MCF 10A (cell line): ENCODE measurements at regions of chr15 and their contacts with region 1.

Region 1: DNA sequence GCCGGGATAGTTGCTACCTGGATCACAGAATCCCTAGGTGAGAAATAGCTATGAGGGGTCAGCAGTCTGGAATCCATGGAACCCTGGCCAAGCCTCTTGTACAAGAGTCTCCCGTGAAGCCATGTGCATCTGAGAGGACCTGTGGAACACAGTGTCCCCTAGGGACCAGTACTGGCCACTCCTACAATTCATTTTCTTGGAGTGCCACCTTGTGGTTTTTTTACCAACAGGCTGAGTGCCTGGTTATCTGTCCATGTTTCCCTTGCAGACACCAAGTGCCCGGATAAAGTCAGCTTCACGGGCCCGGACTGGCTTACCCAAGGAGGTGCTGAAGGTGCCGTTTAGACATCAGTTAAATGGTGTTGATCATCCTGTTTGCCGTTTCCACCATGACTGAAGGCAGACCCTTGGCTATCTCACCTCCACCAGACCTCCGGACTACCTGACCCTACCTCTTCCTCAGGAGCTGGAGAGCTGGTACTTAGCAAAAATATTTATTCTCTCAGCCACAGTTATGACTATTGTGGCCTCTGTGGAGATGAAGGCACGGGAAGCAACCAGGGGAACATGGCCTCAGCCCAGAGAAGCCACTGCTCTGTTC is 93.9 kb downstream of the RBPMS2 start:
- DNase-seq: peak; percentile 68
- H3K4me3 Mint-ChIP-seq: no peak overlapping the region
- H3K27ac Mint-ChIP-seq: no peak overlapping the region
- H3K4me1 Mint-ChIP-seq: no peaks in the 10 kb centered on the region
- H3K27me3 Mint-ChIP-seq: no peaks in the 10 kb centered on the region
- CTCF ChIP-seq: peak; percentile 72

Region 2: DNA sequence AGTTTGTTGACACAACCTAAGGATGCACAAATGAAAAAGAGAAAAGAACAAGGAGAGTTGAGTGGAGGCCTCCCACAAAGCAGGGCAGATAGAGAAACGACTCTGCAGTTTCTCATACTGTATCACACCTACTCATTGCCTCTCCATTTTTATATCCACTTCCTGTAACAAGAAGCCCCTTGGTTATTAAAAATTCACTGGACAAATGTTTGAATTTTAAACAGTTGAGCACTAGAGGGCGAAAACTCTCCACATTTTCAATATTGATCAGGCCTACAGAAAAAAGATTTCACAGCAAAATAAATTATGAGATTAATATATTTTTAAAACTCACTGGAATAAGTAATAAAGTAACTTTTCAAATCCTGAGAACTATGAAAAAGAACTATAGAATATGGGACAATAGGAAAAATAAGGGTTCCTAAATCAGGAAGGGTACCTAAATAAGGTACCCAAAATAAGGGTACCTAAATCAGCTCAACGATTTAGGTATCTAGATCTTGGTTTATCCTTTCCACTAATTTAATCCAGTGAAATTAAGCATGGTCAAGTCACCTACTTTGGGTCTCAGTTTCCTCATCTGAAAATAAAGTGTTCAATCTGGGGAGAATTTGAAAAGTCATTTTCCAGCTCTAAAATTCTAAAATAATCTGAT is 471.7 kb before region 1 on chr15:
- CTCF ChIA-PET with region 1: no interaction called
- POLR2A ChIA-PET with region 1: no interaction called
- intact Hi-C with region 1: loop called (anchors 1 kb)
- DNase-seq: peak; percentile 35
- H3K4me3 Mint-ChIP-seq: no peak overlapping the region
- H3K27ac Mint-ChIP-seq: no peak overlapping the region
- H3K4me1 Mint-ChIP-seq: peaks cover 7% of the 10 kb centered on the region
- H3K27me3 Mint-ChIP-seq: no peaks in the 10 kb centered on the region
- CTCF ChIP-seq: peak; percentile 43

Region 3: DNA sequence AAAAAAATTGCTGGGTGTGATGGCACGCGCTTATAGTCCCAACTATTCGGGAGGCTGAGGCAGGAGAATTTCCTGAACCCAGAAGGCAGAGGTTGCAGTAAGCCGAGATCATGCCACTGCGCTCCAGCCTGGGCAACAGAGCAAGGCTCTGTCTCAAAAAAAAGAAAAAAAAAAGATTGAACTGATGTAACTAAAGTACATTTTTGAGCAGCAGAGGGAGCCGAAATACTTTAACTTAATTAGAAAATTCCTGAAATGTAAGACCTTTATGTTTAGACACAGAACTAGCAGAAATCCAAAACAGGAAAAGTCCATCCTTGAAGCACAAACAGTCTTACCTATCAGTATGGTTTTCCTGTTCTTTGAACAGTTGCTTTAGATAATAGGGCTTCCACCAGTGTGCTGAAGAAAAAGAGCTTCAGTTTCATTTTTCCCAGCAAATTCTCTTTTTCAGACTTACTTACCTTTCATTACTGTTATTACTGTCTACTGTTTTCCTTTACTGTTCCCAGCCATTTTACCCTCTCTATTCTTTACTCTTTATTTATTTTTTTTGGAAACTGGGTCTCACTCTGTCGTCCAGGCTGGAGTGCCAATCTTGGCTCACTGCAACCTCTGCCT is 254.6 kb before region 1 on chr15:
- CTCF ChIA-PET with region 1: interaction called, 33 read pairs
- POLR2A ChIA-PET with region 1: no interaction called
- intact Hi-C with region 1: loop called (anchors 1 kb)
- DNase-seq: peak; percentile 35
- H3K4me3 Mint-ChIP-seq: no peak overlapping the region
- H3K27ac Mint-ChIP-seq: no peak overlapping the region
- H3K4me1 Mint-ChIP-seq: peaks cover 7% of the 10 kb centered on the region
- H3K27me3 Mint-ChIP-seq: no peaks in the 10 kb centered on the region
- CTCF ChIP-seq: peak; percentile 39

Region 4: GRCh38 chr15:64699751-64700388 is 18.3 kb after region 1 on chr15:
- CTCF ChIA-PET with region 1: interaction called, 22 read pairs
- POLR2A ChIA-PET with region 1: interaction called, 4 read pairs
- intact Hi-C with region 1: no loop called
- DNase-seq: peak; percentile 34
- H3K4me3 Mint-ChIP-seq: peak overlapping the region; percentile 72
- H3K27ac Mint-ChIP-seq: peak overlapping the region; percentile 68
- H3K4me1 Mint-ChIP-seq: peaks cover 59% of the 10 kb centered on the region
- H3K27me3 Mint-ChIP-seq: no peaks in the 10 kb centered on the region
- CTCF ChIP-seq: no peak

Region 5: GRCh38 chr15:64720188-64720587 is 38.7 kb after region 1 on chr15:
- CTCF ChIA-PET with region 1: interaction called, 274 read pairs
- POLR2A ChIA-PET with region 1: no interaction called
- intact Hi-C with region 1: no loop called
- DNase-seq: no peak
- H3K4me3 Mint-ChIP-seq: no peak overlapping the region
- H3K27ac Mint-ChIP-seq: no peak overlapping the region
- H3K4me1 Mint-ChIP-seq: no peaks in the 10 kb centered on the region
- H3K27me3 Mint-ChIP-seq: no peaks in the 10 kb centered on the region
- CTCF ChIP-seq: no peak